Lower leg skin (tissue), 4 donors: ENCODE measurements at regions of chr1 and their contacts with region 1.

Region 1: DNA sequence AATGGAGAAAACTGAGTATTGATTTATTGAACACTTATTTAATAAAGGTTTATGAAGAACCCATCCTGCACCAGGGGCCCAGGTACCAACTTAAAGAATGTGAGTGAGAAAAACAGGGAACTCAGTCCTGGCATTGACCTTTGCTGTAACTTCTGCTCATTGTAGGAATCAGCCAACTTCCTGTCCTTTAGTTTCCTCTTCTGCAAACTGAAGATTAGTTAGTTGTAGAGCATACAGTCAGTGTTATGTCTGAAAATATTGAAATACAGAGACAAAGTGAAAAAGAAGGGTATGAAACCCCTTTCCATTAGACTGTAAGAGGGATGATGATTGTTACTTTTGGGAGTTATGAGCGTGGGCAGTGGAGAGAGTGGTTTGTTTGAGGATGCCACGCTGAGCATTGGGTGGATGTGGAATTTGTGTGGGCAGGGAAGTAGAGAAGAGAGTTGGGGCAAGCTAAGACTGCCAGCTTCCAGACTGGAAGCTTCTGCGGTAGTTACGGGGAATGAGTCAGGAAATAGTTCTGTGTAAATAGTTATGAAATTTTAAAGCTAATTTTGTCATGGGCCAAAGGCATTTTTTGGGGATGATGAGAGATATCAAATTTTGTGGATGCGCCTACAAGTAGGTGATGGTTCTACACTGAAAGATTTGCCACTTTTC is 89.2 kb downstream of the GPR88 start:
- DNase-seq: no peak
- H3K4me3 ChIP-seq: no peak overlapping the region
- CTCF ChIP-seq: no peak
- POLR2A ChIP-seq: no peak

Region 2: DNA sequence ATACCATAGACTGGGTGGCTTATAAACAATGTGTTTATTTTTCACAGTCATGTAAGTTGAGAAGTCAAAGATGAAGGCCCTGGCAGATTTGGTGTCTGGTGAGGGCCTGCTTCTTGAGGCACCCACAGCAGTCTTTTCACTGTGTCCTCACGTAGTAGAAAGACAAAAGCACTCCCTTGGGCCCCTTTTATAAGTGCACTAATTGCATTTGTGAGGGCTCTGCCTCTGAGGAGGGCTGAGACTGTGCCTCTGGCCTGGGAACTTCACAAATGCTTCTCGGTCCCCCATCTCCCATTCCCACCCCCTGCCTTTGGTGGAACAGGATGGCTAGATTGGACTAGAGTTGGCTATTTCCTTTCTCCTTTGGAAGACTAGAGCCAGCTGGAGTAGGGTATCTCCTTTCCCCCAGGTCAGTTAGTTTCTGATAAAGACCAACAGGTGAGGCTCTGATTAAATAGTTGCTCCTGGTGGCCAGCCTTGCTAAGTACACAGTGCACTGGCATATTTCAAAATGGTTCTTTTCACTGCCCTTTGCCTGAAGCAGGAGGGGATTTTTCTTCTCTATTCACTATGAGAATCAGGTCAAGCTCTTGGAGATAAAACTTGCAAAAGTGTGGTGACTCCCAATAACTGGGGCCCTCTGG is 1280.0 kb before region 1 on chr1:
- intact Hi-C with region 1: no loop called
- DNase-seq: no peak
- H3K4me3 ChIP-seq: no peak overlapping the region
- CTCF ChIP-seq: no peak
- POLR2A ChIP-seq: no peak

Region 3: GRCh38 chr1:100607628-100608240 is 19.5 kb before region 1 on chr1:
- intact Hi-C with region 1: loop called (anchors 1 kb)
- DNase-seq: no peak
- H3K4me3 ChIP-seq: no peak overlapping the region
- CTCF ChIP-seq: no peak
- POLR2A ChIP-seq: no peak

Region 4: DNA sequence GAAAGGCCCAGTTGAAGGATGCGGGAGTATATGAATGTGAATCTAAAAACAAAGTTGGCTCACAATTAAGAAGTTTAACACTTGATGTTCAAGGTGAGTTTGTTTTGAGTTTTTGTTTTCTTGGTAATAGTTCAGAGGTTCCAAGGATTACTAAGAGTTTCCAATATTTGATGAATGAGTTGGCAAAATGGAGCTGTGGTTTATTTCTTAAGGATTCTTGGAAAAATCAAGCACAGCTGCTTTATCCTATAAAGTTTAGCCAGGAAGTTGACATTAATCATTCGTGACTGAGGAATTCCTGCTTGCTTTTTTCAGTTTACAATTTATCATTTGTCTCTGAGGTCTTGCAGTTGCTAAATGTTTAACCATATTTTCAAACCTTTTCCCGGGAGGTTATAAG is 107.5 kb after region 1 on chr1:
- intact Hi-C with region 1: no loop called
- DNase-seq: no peak
- H3K4me3 ChIP-seq: no peak overlapping the region
- CTCF ChIP-seq: no peak
- POLR2A ChIP-seq: no peak